ENCODE measurements at regions of chr9 and their contacts with region 1.

Region 1: GRCh38 chr9:100437860-100438805 is 11.2 kb downstream of the MSANTD3 start:
- DNase-seq: peak; percentile 22 to 74
- ATAC-seq: peak in 5 of 8 donors; percentile 37 to 78 (median 55)
- H3K4me3 ChIP-seq: no peak overlapping the region
- H3K27ac ChIP-seq: no peak overlapping the region
- H3K4me1 ChIP-seq: peaks cover 0 to 6% (median 0%) of the 10 kb centered on the region in 9 donors
- H3K27me3 ChIP-seq: no peaks in the 10 kb centered on the region
- CTCF ChIP-seq: peak; percentile 90 to 99 (median 94)

Region 2: DNA sequence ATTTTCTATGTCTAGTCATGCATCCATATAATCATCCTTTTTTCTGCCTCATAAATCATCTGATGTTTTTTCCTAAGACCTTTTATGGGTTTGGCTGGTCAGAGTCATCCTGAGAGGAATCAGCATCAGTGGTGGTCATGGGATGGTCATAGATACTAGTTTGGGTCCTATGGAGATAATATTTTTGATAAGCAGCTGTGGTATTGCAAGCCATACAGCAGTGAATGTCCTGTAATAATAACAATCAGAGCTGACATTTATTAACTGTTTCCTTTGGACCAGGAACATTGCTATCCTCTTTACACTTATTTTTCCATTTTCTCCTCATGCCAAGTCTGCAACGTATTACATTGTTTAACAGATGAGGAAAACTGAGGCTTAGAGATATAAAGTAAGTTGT is 168.5 kb before region 1 on chr9:
- intact Hi-C with region 1: no loop called
- DNase-seq: no peak
- ATAC-seq: no peak
- H3K4me3 ChIP-seq: no peak overlapping the region
- H3K27ac ChIP-seq: no peak overlapping the region
- H3K4me1 ChIP-seq: no peaks in the 10 kb centered on the region
- H3K27me3 ChIP-seq: no peaks in the 10 kb centered on the region
- CTCF ChIP-seq: no peak

Region 3: GRCh38 chr9:100346836-100347235 is 91.3 kb before region 1 on chr9:
- intact Hi-C with region 1: loop called in 1 of 10 experiments (anchors 10 kb)
- DNase-seq: no peak
- ATAC-seq: peak in 1 of 8 donors; percentile 76
- H3K4me3 ChIP-seq: no peak overlapping the region
- H3K27ac ChIP-seq: no peak overlapping the region
- H3K4me1 ChIP-seq: peaks cover 0 to 20% (median 16%) of the 10 kb centered on the region in 9 donors
- H3K27me3 ChIP-seq: no peaks in the 10 kb centered on the region
- CTCF ChIP-seq: no peak

Region 4: DNA sequence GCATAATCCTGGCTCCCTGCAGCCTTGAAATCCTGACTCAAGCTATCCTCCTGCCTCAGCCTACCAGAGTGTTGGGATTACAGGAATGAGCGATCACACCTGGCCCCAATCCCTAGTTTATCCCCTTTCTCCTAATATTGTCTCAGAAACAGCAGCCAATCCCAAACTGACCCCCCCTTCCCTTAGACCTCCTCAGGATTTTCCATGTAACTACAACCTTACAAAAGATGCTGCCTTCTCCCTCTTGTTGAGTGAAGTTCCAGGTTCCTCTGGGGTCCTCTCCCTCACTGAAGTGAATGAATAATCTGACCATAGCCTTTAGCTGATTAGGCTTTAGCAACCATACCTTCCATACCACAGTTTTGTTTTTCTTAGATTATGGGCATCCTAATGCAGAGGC is 37.1 kb before region 1 on chr9:
- intact Hi-C with region 1: no loop called
- DNase-seq: no peak
- ATAC-seq: no peak
- H3K4me3 ChIP-seq: no peak overlapping the region
- H3K27ac ChIP-seq: no peak overlapping the region
- H3K4me1 ChIP-seq: no peaks in the 10 kb centered on the region
- H3K27me3 ChIP-seq: peaks cover 0 to 13% (median 0%) of the 10 kb centered on the region in 7 donors
- CTCF ChIP-seq: no peak

Region 5: GRCh38 chr9:100411472-100412283 is 26.5 kb before region 1 on chr9:
- intact Hi-C with region 1: loop called in 1 of 10 experiments (anchors 1 kb)
- DNase-seq: peak; percentile 89 to 90
- ATAC-seq: peak; percentile 98 to 100 (median 99)
- H3K4me3 ChIP-seq: peak overlapping the region in 9 of 10 donors; percentile 34 to 61 (median 54)
- H3K27ac ChIP-seq: peak overlapping the region in 2 of 10 donors; percentile 4 to 64
- H3K4me1 ChIP-seq: peaks cover 0 to 12% (median 0%) of the 10 kb centered on the region in 9 donors
- H3K27me3 ChIP-seq: peaks cover 0 to 14% (median 0%) of the 10 kb centered on the region in 7 donors
- CTCF ChIP-seq: no peak

Region 6: DNA sequence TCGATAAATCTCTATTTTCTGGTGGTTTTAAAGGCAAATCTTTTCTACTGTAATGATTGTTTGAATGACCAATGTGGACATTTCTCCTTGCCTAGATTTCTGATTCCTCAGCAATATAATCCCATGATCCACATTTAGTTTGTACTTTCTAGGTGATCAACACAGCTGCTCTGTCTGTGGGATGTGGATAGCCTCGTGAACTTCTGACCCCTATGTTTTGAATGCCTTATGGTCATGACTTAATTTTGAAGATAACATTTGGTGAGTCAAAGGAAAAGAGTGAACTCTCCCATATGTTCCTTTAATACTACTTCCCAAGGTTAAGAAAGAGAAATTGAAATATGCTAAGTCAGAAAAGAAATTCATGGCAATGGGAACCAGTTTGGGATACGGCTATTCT is 287.2 kb after region 1 on chr9:
- intact Hi-C with region 1: no loop called
- DNase-seq: no peak
- ATAC-seq: no peak
- H3K4me3 ChIP-seq: no peak overlapping the region
- H3K27ac ChIP-seq: no peak overlapping the region
- H3K4me1 ChIP-seq: no peaks in the 10 kb centered on the region
- H3K27me3 ChIP-seq: no peaks in the 10 kb centered on the region
- CTCF ChIP-seq: no peak

Measured in heart right ventricle (tissue), 16 donors.